ENCODE measurements at regions of chr3 and their contacts with region 1.

Region 1: GRCh38 chr3:53130179-53131061 is at the start of gene RFT1:
- DNase-seq: peak; percentile 68 to 94
- ATAC-seq: peak; percentile 88 to 89
- H3K4me3 ChIP-seq: peak within 1 kb of the TSS; percentile 83
- H3K27ac ChIP-seq: peak within 1 kb of the TSS; percentile 92 to 97
- H3K4me1 ChIP-seq: peaks cover 14% of the 10 kb centered on the region; the same call in 2 of the 3 replicates
- CTCF ChIP-seq: no peak
- EP300 ChIP-seq: no peak
- POLR2A ChIP-seq: peak; percentile 82
- RAD21 ChIP-seq: no peak
- polyA plus RNA-seq, gene RFT1: 31.6 and 33.6 TPM in 2 replicates

Region 2: DNA sequence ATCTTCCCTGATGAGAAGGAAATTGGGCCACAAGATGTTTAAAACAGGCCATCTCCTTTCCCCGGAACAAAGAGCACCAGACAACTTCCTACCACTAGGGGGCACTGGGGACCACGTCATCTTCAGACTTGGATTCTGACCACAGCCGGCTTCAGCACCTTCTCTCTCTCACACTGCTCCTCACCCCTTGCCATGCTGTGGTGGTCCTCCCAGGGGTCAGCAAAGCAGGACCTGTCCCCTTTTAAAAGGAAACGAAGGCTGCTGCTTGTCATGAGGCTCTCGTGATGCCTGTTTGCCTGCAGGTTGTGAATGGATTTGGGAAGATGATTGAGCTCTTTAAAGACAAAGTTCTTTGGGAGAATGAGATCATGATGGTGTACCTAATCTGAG is 16.4 kb before region 1 on chr3:
- CTCF ChIA-PET with region 1: interaction called, 23 read pairs
- POLR2A ChIA-PET with region 1: no interaction called
- DNase-seq: peak; percentile 68 to 72
- ATAC-seq: peak; percentile 95 to 96
- H3K4me3 ChIP-seq: no peak overlapping the region
- H3K27ac ChIP-seq: no peak overlapping the region
- H3K4me1 ChIP-seq: peaks cover 5% of the 10 kb centered on the region; the same call in 2 of the 3 replicates
- CTCF ChIP-seq: peak; percentile 74
- EP300 ChIP-seq: no peak
- POLR2A ChIP-seq: no peak
- RAD21 ChIP-seq: peak; percentile 77 to 85

Region 3: GRCh38 chr3:53140847-53141845 is 10.7 kb after region 1 on chr3:
- CTCF ChIA-PET with region 1: interaction called, 12 read pairs
- POLR2A ChIA-PET with region 1: no interaction called
- DNase-seq: peak in 1 of 2 experiments; percentile 18
- ATAC-seq: peak; percentile 32 to 45; a peak in 5 of 6 replicates
- H3K4me3 ChIP-seq: no peak overlapping the region
- H3K27ac ChIP-seq: no peak overlapping the region
- H3K4me1 ChIP-seq: peaks cover 22% of the 10 kb centered on the region
- CTCF ChIP-seq: no peak
- EP300 ChIP-seq: no peak
- POLR2A ChIP-seq: no peak
- RAD21 ChIP-seq: no peak

Region 4: DNA sequence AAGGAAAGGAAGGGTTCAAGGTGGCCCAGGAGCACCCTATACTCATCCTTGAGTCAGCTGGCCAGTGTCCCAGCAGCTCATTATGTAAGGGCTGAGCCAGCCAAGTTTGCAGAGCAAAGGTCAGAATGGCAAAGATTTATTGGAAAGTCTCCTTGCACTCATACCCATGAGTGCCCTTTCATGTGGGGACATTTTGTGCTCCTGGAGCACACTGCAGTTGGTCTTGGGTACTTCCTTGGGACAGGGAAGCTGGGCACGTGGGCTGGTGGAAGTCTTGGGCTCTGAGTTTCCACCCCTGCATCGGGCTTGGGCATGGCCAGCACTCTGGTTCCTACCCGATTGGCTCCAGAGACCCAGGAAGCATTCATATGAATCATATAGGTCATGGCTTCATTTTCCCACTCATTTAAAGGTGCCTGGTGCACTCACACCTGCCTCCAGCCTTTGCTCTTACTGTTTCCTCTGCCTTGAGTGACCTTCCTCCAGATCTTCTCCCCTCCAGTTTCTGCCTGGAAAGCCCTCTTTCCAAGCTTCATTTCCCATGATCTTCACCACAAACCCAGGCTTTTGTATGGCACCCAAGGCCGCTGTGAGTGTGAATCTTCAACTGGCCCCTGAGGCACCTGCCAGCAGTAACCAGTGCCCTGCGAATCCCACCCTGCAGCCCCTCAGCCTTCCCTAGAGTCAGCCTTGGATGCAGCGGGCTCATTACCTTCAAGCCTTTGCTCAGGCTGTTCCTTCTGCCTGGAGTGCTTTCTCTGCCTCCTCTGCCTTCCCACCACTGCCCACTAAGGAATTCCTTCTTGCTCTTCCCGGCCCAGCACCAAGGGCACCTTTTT is 20.0 kb after region 1 on chr3:
- CTCF ChIA-PET with region 1: interaction called, 15 read pairs
- POLR2A ChIA-PET with region 1: no interaction called
- DNase-seq: peak in 1 of 2 experiments; percentile 22
- ATAC-seq: peak; percentile 35 to 55; a peak in 3 of 6 replicates
- H3K4me3 ChIP-seq: no peak overlapping the region
- H3K27ac ChIP-seq: peak overlapping the region; percentile 73 to 74; a peak in 5 of 6 replicates
- H3K4me1 ChIP-seq: peaks cover 47% of the 10 kb centered on the region
- CTCF ChIP-seq: no peak
- EP300 ChIP-seq: no peak
- POLR2A ChIP-seq: no peak
- RAD21 ChIP-seq: no peak

Region 5: GRCh38 chr3:53155760-53156159 is 25.3 kb after region 1 on chr3:
- CTCF ChIA-PET with region 1: interaction called, 15 read pairs
- POLR2A ChIA-PET with region 1: interaction called, 4 read pairs
- DNase-seq: no peak
- ATAC-seq: no peak
- H3K4me3 ChIP-seq: no peak overlapping the region
- H3K27ac ChIP-seq: no peak overlapping the region
- H3K4me1 ChIP-seq: peaks cover 24% of the 10 kb centered on the region
- CTCF ChIP-seq: no peak
- EP300 ChIP-seq: no peak
- POLR2A ChIP-seq: no peak
- RAD21 ChIP-seq: no peak

Region 6: GRCh38 chr3:53190659-53191058 is 60.2 kb after region 1 on chr3:
- CTCF ChIA-PET with region 1: interaction called, 87 read pairs
- POLR2A ChIA-PET with region 1: no interaction called
- DNase-seq: no peak
- ATAC-seq: no peak
- H3K4me3 ChIP-seq: no peak overlapping the region
- H3K27ac ChIP-seq: no peak overlapping the region
- H3K4me1 ChIP-seq: peaks cover 2% of the 10 kb centered on the region; the same call in 2 of the 3 replicates
- CTCF ChIP-seq: no peak
- EP300 ChIP-seq: no peak
- POLR2A ChIP-seq: no peak
- RAD21 ChIP-seq: no peak

Region 7: DNA sequence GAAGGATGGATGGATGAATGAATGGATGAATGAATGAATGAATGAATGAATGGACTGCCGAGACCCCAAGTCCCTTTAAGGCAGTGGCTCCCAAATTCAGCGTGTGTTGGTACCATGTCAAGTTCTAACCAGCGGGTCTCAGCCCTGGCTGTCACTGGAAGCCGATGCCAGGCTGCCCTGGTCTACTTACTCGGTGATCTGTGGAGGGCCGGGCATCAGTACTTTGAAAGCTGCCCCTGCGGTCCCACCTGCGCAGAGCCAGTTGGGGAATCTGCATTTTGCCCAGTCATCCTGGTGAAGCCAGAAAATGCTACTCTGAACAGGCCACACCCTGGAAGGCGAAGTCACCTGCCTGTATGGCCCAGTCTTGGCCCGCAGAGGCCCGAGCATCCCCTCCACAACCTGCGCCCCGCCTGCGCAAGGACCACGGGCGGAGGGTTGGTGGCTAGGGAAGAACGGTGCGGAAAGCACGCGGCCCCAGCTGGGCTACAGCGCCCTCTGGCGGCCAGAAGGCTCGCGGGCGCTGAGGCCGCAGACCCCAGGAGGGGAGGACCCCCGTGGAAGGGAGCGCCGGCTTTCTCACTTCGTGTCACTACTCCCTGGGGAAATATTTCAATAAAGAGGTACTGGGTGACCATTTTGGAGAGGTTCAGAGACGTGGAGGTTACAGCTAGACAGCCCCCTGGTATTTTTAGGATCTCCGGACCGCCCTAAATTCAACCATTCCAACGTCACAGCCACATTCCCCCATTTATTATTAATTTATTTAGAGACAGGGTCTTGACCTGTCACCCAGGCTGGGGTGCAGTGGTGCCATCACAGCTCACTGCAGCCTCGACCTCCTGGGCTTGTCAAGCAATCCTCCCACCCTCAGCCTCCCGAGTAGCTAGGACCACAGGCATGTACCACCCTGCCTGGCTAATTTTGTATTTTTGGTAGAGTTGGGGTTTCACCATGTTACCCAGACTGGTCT is 65.5 kb after region 1 on chr3:
- CTCF ChIA-PET with region 1: interaction called, 87 read pairs
- POLR2A ChIA-PET with region 1: no interaction called
- DNase-seq: peak; percentile 46 to 54
- ATAC-seq: peak; percentile 44 to 71; a peak in 5 of 6 replicates
- H3K4me3 ChIP-seq: no peak overlapping the region
- H3K27ac ChIP-seq: peak overlapping the region; percentile 61 to 80; a peak in 5 of 6 replicates
- H3K4me1 ChIP-seq: peaks cover 15% of the 10 kb centered on the region
- CTCF ChIP-seq: peak; percentile 90
- EP300 ChIP-seq: no peak
- POLR2A ChIP-seq: no peak
- RAD21 ChIP-seq: peak; percentile 79 to 81

Measured in A549 (cell line).